CD4-positive, alpha-beta T cell (primary cell): ENCODE measurements at regions of chr4 and their contacts with region 1.

Region 1: DNA sequence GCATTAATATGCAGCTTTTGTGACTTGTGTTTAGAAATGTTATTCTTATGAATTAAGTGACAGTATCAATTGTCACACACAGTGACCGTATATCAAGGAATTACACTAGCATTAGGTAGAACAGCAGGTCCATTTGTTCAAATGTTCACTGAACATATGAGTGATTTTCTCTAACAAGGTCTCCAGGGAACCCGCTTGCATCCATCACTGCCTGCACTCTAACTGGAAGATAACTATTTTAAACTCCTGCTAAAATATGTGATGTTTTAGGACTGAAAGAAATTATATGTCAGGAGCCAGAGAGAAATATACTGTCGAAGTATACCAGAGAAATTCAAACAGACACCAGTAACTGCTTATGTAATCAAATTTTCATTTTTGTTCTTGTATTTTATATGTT is 1395.7 kb downstream of the PCDH18 start:
- DNase-seq: no peak
- ATAC-seq: no peak
- H3K4me3 ChIP-seq: no peak overlapping the region
- H3K4me3 Mint-ChIP-seq: no peak overlapping the region
- H3K27ac ChIP-seq: no peak overlapping the region
- H3K27ac Mint-ChIP-seq: no peak overlapping the region
- H3K4me1 ChIP-seq: no peaks in the 10 kb centered on the region
- H3K4me1 Mint-ChIP-seq: no peaks in the 10 kb centered on the region
- H3K27me3 ChIP-seq: no peaks in the 10 kb centered on the region
- H3K27me3 Mint-ChIP-seq: no peaks in the 10 kb centered on the region
- CTCF ChIP-seq: no peak

Region 2: DNA sequence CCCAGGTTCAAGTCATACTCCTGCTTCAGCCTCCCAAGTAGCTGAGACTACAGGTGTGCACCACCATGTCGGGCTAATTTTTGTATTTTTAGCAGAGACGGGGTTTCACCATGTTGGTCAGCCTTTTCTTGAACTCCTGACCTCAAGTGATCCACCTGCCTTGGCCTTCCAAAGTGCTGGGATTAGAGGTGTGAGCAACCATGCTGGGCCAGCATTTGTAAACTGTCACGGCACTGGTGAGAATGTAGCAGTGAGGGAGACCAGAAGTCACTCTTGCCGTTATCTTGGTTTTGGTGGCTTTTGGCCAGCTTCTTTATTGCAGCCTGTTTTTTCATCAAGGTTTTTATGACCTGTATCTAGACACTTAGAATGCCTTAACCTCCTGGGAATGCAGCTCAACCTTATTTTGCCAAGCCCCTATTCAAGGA is 1373.3 kb after region 1 on chr4:
- CTCF ChIA-PET with region 1: no interaction called
- POLR2A ChIA-PET with region 1: no interaction called
- intact Hi-C with region 1: loop called in 1 of 2 experiments (anchors 10 kb)
- DNase-seq: no peak
- ATAC-seq: no peak
- H3K4me3 ChIP-seq: no peak overlapping the region
- H3K4me3 Mint-ChIP-seq: no peak overlapping the region
- H3K27ac ChIP-seq: no peak overlapping the region
- H3K27ac Mint-ChIP-seq: no peak overlapping the region
- H3K4me1 ChIP-seq: no peaks in the 10 kb centered on the region
- H3K4me1 Mint-ChIP-seq: no peaks in the 10 kb centered on the region
- H3K27me3 ChIP-seq: no peaks in the 10 kb centered on the region
- H3K27me3 Mint-ChIP-seq: no peaks in the 10 kb centered on the region
- CTCF ChIP-seq: no peak